Aorta (tissue), 5 donors: ENCODE measurements at regions of chr9 and their contacts with region 1.

Region 1: GRCh38 chr9:136605988-136606660 is 56.6 kb upstream of the EGFL7 start:
- DNase-seq: peak; percentile 77 to 84
- ATAC-seq: peak; percentile 58
- H3K4me3 ChIP-seq: no peak overlapping the region
- H3K27ac ChIP-seq: peak overlapping the region in 1 of 2 donors; percentile 60
- H3K4me1 ChIP-seq: no peaks in the 10 kb centered on the region
- H3K27me3 ChIP-seq: no peaks in the 10 kb centered on the region

Region 2: GRCh38 chr9:136545966-136546698 is 60.0 kb before region 1 on chr9 and contains the start of gene NOTCH1:
- intact Hi-C with region 1: loop called in 1 of 2 experiments (anchors 5 kb)
- DNase-seq: peak; percentile 96 to 97
- ATAC-seq: peak; percentile 88
- H3K4me3 ChIP-seq: peak within 1 kb of the TSS; percentile 84 to 87
- H3K27ac ChIP-seq: peak within 1 kb of the TSS; percentile 16 to 72
- H3K4me1 ChIP-seq: no peaks in the 10 kb centered on the region
- H3K27me3 ChIP-seq: no peaks in the 10 kb centered on the region
- total RNA-seq, gene NOTCH1: 47.4 to 81.6 TPM